ENCODE measurements at regions of chr11 and their contacts with region 1.

Region 1: GRCh38 chr11:64269380-64270234 is 14.9 kb downstream of the BAD start:
- DNase-seq: peak; percentile 100
- H3K4me3 ChIP-seq: peak overlapping the region; percentile 78
- H3K27ac ChIP-seq: peak overlapping the region; percentile 94
- H3K4me1 ChIP-seq: peaks cover 16% of the 10 kb centered on the region
- H3K27me3 ChIP-seq: no peaks in the 10 kb centered on the region
- CTCF ChIP-seq: 0 out of 2 replicates have a peak, but pooled peaks have one; percentile 22

Region 2: DNA sequence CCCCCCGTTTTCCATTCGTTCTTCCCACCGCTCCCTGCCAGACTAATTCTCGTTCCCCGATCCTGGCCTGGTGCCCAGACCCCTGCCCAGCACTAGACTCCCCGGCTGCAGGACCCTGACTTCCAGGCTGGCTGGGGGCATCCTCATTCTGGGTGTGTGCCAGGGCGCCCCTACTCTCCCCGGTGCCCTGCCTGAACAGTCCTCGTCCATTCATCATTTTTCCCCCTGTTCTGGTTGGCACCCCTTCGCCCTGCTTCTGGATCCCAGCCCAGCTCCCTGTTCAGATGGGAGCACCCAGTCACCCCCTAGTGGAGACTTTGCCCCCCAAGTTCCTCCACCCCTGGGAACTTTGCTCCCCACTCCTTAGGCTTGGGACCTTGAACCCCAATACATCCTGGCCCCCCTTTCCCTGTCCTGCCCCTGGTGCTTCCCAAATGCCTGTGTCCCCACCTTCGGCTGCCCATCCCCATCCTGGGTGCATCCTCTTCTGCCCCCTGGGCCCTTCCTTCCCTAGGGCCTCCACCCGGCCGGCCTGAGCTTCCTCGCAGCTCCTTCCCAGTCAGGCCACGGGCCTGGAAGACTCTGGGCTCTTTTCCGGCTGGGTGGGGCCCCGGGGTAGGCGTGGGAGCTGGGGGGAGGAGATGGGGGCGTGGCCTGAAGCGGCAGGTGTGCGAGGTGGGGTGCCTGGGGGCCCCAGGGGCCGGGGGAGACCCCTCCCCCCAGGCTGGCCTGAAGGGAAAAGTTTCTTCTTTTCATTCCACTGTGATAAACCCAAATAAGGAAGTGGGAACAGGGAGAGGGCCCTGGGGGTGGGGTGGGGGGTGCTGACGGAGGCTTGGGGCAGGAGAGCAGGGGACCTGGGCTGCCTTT is 17.4 kb before region 1 on chr11:
- CTCF ChIA-PET with region 1: interaction called, 10 read pairs
- POLR2A ChIA-PET with region 1: no interaction called
- intact Hi-C with region 1: no loop called
- DNase-seq: peak; percentile 55
- H3K4me3 ChIP-seq: peak overlapping the region; percentile 79
- H3K27ac ChIP-seq: peak overlapping the region; percentile 68
- H3K4me1 ChIP-seq: peaks cover 27% of the 10 kb centered on the region
- H3K27me3 ChIP-seq: no peaks in the 10 kb centered on the region
- CTCF ChIP-seq: peak; percentile 64

Region 3: GRCh38 chr11:64284048-64284961 is 14.7 kb after region 1 on chr11 and contains the start of gene BAD:
- CTCF ChIA-PET with region 1: interaction called, 5 read pairs
- POLR2A ChIA-PET with region 1: no interaction called
- intact Hi-C with region 1: loop called (anchors 2 kb)
- DNase-seq: peak; percentile 97
- H3K4me3 ChIP-seq: peak within 1 kb of the TSS; percentile 87
- H3K27ac ChIP-seq: peak within 1 kb of the TSS; percentile 73
- H3K4me1 ChIP-seq: peaks cover 13% of the 10 kb centered on the region
- H3K27me3 ChIP-seq: no peaks in the 10 kb centered on the region
- CTCF ChIP-seq: no peak
- total RNA-seq, gene BAD: 48.4 and 62.2 TPM in 2 replicates